Activated T-helper 2 cell treated with anti-CD3 and anti-CD28 coated beads, Interferon-gamma antibody, Interleukin-2, Interleukin-4, amounts not matched to agents 10 μg/mL and 5 μg/mL and 100 μg/mL, durations not matched to agents 14 hours and 24 hours and 36 hours (primary cell): ENCODE measurements at regions of chr17 and their contacts with region 1.

Region 1: DNA sequence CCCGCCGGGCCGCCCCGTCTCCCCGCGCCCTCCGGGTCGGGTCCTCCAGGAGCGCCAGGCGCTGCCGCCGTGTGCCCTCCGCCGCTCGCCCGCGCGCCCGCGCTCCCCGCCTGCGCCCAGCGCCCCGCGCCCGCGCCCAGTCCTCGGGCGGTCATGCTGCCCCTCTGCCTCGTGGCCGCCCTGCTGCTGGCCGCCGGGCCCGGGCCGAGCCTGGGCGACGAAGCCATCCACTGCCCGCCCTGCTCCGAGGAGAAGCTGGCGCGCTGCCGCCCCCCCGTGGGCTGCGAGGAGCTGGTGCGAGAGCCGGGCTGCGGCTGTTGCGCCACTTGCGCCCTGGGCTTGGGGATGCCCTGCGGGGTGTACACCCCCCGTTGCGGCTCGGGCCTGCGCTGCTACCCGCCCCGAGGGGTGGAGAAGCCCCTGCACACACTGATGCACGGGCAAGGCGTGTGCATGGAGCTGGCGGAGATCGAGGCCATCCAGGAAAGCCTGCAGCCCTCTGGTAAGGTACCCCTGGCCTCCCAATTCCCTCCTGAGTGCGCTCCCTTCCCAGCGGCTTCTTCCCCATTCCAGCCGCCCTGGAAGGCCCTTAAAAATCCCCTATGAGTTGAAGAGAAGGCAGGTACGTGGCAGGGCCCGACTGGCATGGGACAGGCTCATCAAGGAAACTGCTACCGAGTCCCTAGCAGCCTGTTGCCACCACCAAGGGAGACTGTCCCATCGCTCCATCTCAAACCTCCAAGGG is 505 bp downstream of the IGFBP4 start:
- DNase-seq: peak; percentile 66
- H3K4me3 Mint-ChIP-seq: peak overlapping the region; percentile 84
- H3K27ac Mint-ChIP-seq: peak overlapping the region; percentile 89
- H3K4me1 Mint-ChIP-seq: peaks cover 39% of the 10 kb centered on the region
- H3K27me3 Mint-ChIP-seq: no peaks in the 10 kb centered on the region

Region 2: DNA sequence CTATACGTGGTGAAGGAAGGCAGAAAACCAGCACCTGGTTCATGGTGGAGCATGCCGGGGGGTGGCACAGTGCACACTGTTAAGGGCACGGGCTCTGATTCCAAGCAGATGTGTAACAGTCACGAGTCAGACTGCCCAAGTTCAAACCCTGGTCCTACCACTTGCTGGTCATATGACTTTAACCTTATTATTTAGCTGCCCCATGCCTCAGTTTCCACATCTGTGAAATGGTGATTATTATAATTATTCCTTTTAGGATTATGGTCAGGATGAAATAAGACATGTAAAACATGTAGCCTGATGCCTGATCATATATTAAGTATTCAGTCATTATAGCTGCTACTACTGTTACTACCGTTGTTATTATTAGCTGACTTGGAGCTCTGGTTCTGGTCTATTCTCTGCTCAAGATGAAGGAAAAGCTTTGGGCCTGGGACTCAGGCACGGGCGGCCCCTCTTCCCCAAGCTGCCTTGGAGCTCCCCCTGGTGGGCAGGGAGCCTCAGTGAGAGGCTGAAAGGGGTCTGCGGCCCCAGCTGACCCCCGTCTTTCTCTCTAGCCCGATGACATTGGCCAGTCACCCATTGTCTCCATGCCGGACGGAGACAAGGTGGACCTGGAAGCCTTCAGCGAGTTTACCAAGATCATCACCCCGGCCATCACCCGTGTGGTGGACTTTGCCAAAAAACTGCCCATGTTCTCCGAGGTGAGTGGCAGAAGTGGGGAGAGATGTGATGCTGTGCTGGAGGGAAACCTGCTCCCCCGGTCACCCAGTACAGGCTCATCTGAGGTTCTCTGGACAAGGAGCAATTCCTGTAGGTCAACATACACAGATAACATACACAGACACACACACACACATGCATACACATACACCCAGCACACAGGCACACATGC is 357.4 kb before region 1 on chr17:
- intact Hi-C with region 1: no loop called
- DNase-seq: no peak
- H3K4me3 Mint-ChIP-seq: no peak overlapping the region
- H3K27ac Mint-ChIP-seq: no peak overlapping the region
- H3K4me1 Mint-ChIP-seq: no peaks in the 10 kb centered on the region
- H3K27me3 Mint-ChIP-seq: no peaks in the 10 kb centered on the region

Region 3: DNA sequence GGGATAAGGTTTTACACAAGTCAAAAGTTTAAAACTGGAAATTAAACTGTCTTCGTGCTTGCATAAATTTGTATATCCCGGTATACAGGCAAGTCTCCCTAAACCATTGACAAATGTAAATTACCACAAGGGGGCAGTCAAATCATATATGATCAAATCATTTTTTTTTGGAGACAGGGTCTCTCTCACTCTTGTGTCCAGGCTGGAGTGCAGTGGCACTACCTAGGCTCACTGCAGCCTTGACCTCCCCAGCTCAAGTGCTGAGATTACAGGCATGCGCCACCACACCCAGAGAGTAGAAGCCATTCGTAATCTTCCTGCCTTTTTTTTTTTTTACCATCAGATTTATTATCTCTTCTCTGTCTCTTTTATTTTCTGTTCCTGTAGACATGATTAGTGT is 44.6 kb before region 1 on chr17:
- intact Hi-C with region 1: loop called (anchors 5 kb)
- DNase-seq: no peak
- H3K4me3 Mint-ChIP-seq: no peak overlapping the region
- H3K27ac Mint-ChIP-seq: peak overlapping the region; percentile 60
- H3K4me1 Mint-ChIP-seq: peaks cover 26% of the 10 kb centered on the region
- H3K27me3 Mint-ChIP-seq: no peaks in the 10 kb centered on the region

Region 4: GRCh38 chr17:40427002-40427491 is 16.7 kb before region 1 on chr17:
- intact Hi-C with region 1: loop called (anchors 2 kb)
- DNase-seq: no peak
- H3K4me3 Mint-ChIP-seq: peak overlapping the region; percentile 47
- H3K27ac Mint-ChIP-seq: peak overlapping the region; percentile 58
- H3K4me1 Mint-ChIP-seq: peaks cover 31% of the 10 kb centered on the region
- H3K27me3 Mint-ChIP-seq: peaks cover 5% of the 10 kb centered on the region